Dendritic cell treated with granulocyte-macrophage colony-stimulating factor and Interleukin-4, amounts not matched to agents 40 ng/mL and 50 ng/mL, for 4 days (primary cell): ENCODE measurements at regions of chr1 and their contacts with region 1.

Region 1: DNA sequence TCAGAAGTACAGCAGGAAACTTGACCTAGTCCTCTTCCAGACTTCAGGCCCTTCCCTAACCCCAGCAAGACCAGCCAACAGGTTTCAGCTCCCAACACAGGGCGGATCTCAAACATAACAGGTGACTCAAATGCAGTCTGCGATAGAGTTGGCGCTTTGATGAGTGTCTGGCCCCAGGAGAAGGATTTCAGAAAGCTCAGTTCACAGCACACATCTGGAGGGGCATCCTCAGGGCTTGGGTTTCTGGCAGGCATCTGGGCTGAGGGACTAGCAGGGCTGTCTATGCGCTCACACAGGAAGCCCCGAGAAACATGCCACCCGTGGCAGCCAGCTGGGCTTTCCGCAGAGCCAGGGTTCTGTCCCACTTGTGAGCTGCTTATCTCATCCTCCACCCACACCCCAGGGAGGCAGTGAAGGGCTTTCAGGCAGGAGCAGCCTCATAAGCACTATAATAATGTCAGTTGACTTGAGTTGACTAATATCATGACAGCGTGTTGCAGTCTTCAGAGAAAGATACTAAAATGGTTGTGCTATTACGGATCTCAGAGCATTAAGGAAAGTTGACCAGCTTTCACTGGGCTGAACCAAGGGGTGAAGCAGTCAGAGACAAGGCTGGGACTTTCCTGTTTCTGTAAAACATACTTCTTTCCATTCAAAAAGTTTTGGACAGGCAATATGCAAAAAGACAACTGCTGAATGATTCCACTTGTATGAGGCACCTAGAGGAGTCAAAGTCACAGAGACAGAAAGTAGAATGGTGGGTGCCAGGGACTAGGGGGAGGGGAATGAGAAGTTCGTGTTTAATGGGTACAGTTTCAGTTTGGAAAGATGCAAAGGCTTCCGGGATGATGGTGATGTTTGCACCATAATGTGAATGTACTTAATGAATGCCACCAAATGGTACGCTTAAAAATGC is 233.0 kb upstream of the IRF2BP2 start:
- H3K4me3 Mint-ChIP-seq: peak overlapping the region; percentile 26
- H3K27ac Mint-ChIP-seq: peak overlapping the region; percentile 96
- H3K4me1 Mint-ChIP-seq: peaks cover 89% of the 10 kb centered on the region
- H3K27me3 Mint-ChIP-seq: no peaks in the 10 kb centered on the region

Region 2: GRCh38 chr1:234499119-234499942 is 343.7 kb before region 1 on chr1:
- intact Hi-C with region 1: loop called (anchors 5 kb)
- H3K4me3 Mint-ChIP-seq: peak overlapping the region; percentile 60
- H3K27ac Mint-ChIP-seq: peak overlapping the region; percentile 91
- H3K4me1 Mint-ChIP-seq: peaks cover 49% of the 10 kb centered on the region
- H3K27me3 Mint-ChIP-seq: no peaks in the 10 kb centered on the region

Region 3: GRCh38 chr1:234610348-234611152 is 232.4 kb before region 1 on chr1:
- intact Hi-C with region 1: loop called (anchors 2 kb)
- H3K4me3 Mint-ChIP-seq: peak overlapping the region; percentile 76
- H3K27ac Mint-ChIP-seq: peak overlapping the region; percentile 100
- H3K4me1 Mint-ChIP-seq: peaks cover 38% of the 10 kb centered on the region
- H3K27me3 Mint-ChIP-seq: no peaks in the 10 kb centered on the region

Region 4: DNA sequence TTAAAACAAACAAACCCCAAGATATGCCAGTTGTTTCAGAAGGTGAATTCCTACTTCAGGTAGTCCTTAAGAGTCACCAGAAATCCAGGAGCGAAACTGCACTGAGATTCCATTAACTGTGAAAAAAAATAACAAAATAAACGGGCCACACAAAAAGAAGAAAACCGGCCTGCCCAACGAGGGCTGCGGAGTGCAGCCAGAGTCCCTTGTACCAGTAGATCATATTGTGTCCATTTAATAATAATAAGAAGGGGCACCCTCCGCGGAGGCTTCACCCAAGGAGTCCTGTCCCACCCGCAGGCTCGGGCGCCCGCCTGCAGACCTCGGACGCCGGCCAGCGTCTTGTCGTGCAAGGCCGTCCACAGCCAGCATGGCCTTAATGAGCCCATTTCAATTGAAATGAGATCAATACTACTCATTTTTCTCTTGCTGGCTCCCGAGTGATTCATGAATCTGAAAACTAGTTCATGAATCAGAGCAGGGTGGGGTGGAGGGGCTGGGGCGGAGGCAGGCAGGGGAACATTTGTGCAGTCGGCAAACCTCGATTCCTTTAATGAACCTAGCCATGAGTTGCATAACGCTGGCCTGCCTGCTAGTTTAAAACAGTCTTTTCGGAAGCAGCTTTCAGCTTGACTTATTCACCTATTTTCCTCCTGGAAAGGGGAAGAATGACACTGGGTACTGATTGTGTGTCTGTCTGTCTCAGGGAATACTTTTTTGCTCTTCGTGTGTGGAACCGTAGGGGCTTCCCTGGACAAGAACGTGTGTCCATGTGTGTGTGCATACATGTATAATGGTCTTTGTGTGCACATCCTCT is 119.9 kb before region 1 on chr1:
- intact Hi-C with region 1: loop called (anchors 2 kb)
- H3K4me3 Mint-ChIP-seq: peak overlapping the region; percentile 57
- H3K27ac Mint-ChIP-seq: peak overlapping the region; percentile 99
- H3K4me1 Mint-ChIP-seq: peaks cover 97% of the 10 kb centered on the region
- H3K27me3 Mint-ChIP-seq: no peaks in the 10 kb centered on the region

Region 5: GRCh38 chr1:234772345-234773147 is 70.4 kb before region 1 on chr1:
- intact Hi-C with region 1: loop called (anchors 2 kb)
- H3K4me3 Mint-ChIP-seq: peak overlapping the region; percentile 2
- H3K27ac Mint-ChIP-seq: no peak overlapping the region
- H3K4me1 Mint-ChIP-seq: peaks cover 56% of the 10 kb centered on the region
- H3K27me3 Mint-ChIP-seq: no peaks in the 10 kb centered on the region

Region 6: DNA sequence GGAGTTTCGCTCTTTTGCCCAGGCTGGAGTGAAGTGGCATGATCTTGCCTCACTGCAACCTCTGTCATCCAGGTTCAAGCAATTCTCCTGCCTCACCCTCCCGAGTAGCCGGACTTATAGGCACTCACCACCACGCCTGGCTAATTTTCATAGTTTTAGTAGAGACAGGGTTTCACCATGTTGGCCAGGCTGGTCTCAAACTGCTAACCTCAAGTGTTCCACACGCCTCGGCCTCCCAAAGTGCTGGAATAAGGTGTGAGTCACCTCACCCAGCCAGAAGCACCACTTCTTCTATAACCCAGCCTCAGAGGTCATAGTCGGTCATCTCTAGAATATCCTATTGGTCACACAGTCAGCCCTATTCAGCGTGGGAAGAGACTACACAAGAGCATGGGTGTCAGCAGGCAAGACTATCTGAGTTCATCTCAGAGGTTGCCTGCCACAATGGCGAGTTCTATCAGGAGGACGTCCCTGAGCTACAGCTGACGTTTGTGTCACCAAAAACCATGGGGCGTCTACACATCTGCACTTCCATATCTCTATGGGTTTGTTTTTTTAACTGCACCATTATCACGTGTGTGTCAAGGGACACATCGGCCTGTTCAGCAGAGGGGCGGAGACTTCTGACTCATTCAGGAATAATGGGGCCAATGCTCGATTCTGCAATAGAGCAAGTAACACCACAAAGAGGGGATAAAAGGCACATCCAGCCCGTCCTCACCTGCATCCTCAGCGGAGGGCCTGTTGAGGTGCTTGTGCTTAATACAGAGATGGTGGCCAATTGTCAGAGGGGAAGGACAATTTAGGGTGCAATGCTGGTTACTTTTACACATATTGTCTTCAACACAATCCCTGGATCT is 23.3 kb after region 1 on chr1:
- intact Hi-C with region 1: loop called (anchors 2 kb)
- H3K4me3 Mint-ChIP-seq: peak overlapping the region; percentile 27
- H3K27ac Mint-ChIP-seq: peak overlapping the region; percentile 92
- H3K4me1 Mint-ChIP-seq: peaks cover 80% of the 10 kb centered on the region
- H3K27me3 Mint-ChIP-seq: no peaks in the 10 kb centered on the region

Region 7: DNA sequence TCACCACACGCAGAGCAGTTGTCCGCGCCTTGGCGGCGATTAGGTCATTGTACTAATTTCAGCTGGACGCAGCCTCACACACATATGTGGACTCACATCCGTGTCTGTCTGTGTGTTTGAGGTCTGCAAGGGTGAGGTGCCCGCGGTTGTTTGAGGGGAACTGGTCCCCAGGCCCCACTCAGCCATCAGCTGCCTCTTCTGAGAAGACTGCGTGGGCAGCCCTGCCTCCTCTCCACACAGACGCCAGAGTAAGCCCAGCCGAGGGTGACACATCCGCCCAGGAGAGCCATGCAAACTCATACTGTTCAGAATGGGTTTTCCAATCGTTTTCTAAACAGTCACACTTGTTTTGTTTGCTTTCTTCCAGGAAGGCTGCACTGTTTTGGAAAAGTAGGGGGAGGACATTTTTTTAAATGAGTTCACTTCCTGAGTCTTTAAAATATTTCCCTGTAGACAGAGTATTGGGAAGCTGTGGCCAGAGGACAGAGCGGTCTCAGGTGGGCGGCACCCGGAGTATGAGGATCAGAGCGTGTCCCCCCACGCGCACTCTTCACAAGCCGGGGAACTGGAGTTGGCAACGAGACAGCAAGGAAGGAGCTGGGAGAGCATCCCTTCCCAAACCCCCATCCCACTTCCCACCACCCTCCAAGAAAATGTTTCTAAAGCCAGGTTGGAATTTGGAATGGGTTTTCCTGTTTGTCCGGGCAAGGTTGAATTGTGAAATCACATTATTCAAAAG is 232.4 kb after region 1 on chr1:
- intact Hi-C with region 1: loop called (anchors 5 kb)
- H3K4me3 Mint-ChIP-seq: peak overlapping the region; percentile 27
- H3K27ac Mint-ChIP-seq: no peak overlapping the region
- H3K4me1 Mint-ChIP-seq: peaks cover 40% of the 10 kb centered on the region
- H3K27me3 Mint-ChIP-seq: no peaks in the 10 kb centered on the region